Activated CD4-positive, alpha-beta memory T cell treated with anti-CD3 and anti-CD28 coated beads for 36 hours (primary cell): ENCODE measurements at regions of chr17 and their contacts with region 1.

Region 1: GRCh38 chr17:59435238-59435637 is 103.8 kb downstream of the YPEL2 start:
- DNase-seq: no peak
- H3K4me3 Mint-ChIP-seq: no peak overlapping the region
- H3K27ac Mint-ChIP-seq: peak overlapping the region; percentile 89
- H3K4me1 Mint-ChIP-seq: peaks cover 61% of the 10 kb centered on the region
- H3K27me3 Mint-ChIP-seq: peaks cover 6% of the 10 kb centered on the region

Region 2: DNA sequence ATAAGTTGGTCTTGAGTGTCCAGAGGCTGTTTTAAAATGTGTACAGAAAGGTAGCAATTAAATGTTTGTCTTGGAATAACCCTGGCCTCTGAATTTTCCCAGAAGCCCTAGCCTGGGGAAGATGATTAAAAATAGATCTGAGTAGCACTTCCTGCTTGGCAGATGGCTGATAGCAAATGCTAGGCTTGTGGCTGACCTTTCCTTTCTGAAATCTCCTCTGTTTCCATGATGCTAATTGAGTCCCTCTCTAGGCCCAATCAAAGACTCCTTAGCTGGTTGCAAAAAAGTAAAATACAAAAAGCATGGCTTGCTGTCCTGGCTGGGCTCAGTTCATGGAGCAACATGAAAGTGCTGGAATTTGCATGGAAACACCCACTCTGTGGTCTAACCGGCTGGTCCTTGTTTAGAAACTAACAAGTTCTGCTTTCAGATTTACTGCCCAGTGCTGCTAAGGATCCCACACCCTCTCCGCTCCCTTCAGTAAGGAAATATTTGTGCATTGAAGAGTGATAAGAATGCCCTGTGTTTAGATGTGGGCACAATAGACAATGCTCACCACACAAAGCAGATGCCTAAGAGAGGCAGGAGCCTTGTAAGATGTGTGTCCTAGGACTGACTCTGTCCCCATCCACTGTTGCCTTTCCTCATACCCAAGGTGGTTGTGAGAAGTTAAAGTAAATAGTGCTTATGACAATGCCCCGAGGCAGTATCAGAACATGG is 62.9 kb before region 1 on chr17:
- CTCF ChIA-PET with region 1: no interaction called
- POLR2A ChIA-PET with region 1: no interaction called
- intact Hi-C with region 1: loop called (anchors 2 kb)
- DNase-seq: no peak
- H3K4me3 Mint-ChIP-seq: no peak overlapping the region
- H3K27ac Mint-ChIP-seq: peak overlapping the region; percentile 30
- H3K4me1 Mint-ChIP-seq: peaks cover 67% of the 10 kb centered on the region
- H3K27me3 Mint-ChIP-seq: no peaks in the 10 kb centered on the region